SK-N-SH (cell line): ENCODE measurements at regions of chr10 and their contacts with region 1.

Region 1: GRCh38 chr10:71766702-71767419 is 6.5 kb downstream of the VSIR start:
- DNase-seq: no peak
- H3K4me3 ChIP-seq: no peak overlapping the region
- H3K27ac ChIP-seq: peak overlapping the region; percentile 46 to 76
- H3K4me1 ChIP-seq: peaks cover 12 to 15% of the 10 kb centered on the region in 2 experiments; a peak in 3 of 4 replicates
- H3K27me3 ChIP-seq: no peaks in the 10 kb centered on the region
- CTCF ChIP-seq: no peak
- EP300 ChIP-seq: peak in 1 of 2 experiments; percentile 84; a peak in 3 of 4 replicates
- RAD21 ChIP-seq: no peak

Region 2: GRCh38 chr10:71745657-71746250 is 21.1 kb before region 1 on chr10:
- CTCF ChIA-PET with region 1: no interaction called
- POLR2A ChIA-PET with region 1: no interaction called
- DNase-seq: no peak
- H3K4me3 ChIP-seq: no peak overlapping the region
- H3K27ac ChIP-seq: no peak overlapping the region
- H3K4me1 ChIP-seq: peaks cover 0 to 20% of the 10 kb centered on the region in 2 experiments; a peak in 1 of 4 replicates
- H3K27me3 ChIP-seq: no peaks in the 10 kb centered on the region
- CTCF ChIP-seq: no peak
- EP300 ChIP-seq: no peak
- RAD21 ChIP-seq: no peak

Region 3: DNA sequence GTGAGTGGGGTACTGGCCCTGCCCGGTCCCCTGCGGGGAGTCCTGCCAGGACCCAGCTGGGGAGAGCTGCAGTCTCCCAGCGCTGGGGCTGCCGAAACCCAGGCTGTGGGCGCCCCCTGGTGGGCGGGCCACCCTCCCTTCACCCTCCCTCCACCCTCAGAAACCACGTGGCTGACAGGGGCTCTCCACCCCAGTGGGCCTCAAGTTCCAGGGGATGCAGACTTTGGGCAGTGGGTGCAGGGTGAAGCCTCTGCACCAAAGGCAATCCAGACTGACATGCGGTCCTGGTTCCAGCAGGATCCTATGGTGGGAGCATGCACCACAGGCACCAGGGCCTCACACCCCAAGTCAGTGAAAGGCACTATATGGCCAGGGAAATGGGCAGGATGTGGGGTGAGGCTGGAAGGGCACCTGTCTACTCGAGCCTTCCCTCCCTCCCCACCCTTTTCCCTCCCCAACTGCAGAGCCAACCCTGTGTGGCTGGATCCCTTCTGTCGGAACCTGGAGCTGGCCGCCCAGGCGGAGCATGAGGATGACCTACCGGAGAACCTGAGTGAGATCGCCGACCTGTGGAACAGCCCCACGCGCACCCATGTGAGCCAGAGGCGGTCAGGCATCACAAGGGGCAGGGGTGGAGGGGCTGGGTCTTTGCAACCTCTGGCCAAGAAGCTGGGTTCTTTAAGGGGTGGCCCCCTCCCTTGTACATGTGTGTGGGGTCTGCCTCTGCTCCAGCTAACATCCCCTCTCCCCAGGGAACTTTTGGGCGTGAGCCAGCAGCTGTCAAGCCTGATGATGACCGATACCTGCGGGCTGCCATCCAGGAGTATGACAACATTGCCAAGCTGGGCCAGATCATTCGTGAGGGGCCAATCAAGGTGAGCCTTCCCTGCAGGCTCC is 45.4 kb after region 1 on chr10:
- CTCF ChIA-PET with region 1: interaction called, 11 read pairs
- POLR2A ChIA-PET with region 1: no interaction called
- DNase-seq: peak; percentile 90
- H3K4me3 ChIP-seq: no peak overlapping the region; a peak in 1 of 4 replicates
- H3K27ac ChIP-seq: no peak overlapping the region
- H3K4me1 ChIP-seq: no peaks in the 10 kb centered on the region; a peak in 1 of 4 replicates
- H3K27me3 ChIP-seq: no peaks in the 10 kb centered on the region
- CTCF ChIP-seq: peak; percentile 74
- EP300 ChIP-seq: no peak
- RAD21 ChIP-seq: peak; percentile 78